ENCODE measurements at regions of chr15 and their contacts with region 1.

Region 1: GRCh38 chr15:65888981-65889380 is 19.7 kb downstream of the RAB11A start:
- DNase-seq: no peak
- ATAC-seq: no peak
- H3K4me3 ChIP-seq: no peak overlapping the region
- H3K27ac ChIP-seq: peak overlapping the region in 1 of 12 donors; percentile 30
- H3K4me1 ChIP-seq: peaks cover 0 to 29% (median 0%) of the 10 kb centered on the region in 12 donors
- H3K27me3 ChIP-seq: no peaks in the 10 kb centered on the region
- CTCF ChIP-seq: no peak
- POLR2A ChIP-seq: no peak

Region 2: GRCh38 chr15:65773386-65774111 is 115.4 kb before region 1 on chr15:
- intact Hi-C with region 1: no loop called
- DNase-seq: no peak
- ATAC-seq: no peak
- H3K4me3 ChIP-seq: no peak overlapping the region
- H3K27ac ChIP-seq: no peak overlapping the region
- H3K4me1 ChIP-seq: peaks cover 0 to 43% (median 0%) of the 10 kb centered on the region in 12 donors
- H3K27me3 ChIP-seq: no peaks in the 10 kb centered on the region
- CTCF ChIP-seq: no peak
- POLR2A ChIP-seq: no peak

Region 3: GRCh38 chr15:65875458-65875857 is 13.5 kb before region 1 on chr15:
- intact Hi-C with region 1: loop called in 1 of 10 experiments (anchors 2 kb)
- DNase-seq: no peak
- ATAC-seq: no peak
- H3K4me3 ChIP-seq: no peak overlapping the region
- H3K27ac ChIP-seq: peak overlapping the region in 1 of 12 donors; percentile 3
- H3K4me1 ChIP-seq: peaks cover 0 to 48% (median 32%) of the 10 kb centered on the region in 12 donors
- H3K27me3 ChIP-seq: no peaks in the 10 kb centered on the region
- CTCF ChIP-seq: no peak
- POLR2A ChIP-seq: no peak

Measured in heart left ventricle (tissue), 16 donors.